ENCODE measurements at regions of chr1 and their contacts with region 1.

Region 1: DNA sequence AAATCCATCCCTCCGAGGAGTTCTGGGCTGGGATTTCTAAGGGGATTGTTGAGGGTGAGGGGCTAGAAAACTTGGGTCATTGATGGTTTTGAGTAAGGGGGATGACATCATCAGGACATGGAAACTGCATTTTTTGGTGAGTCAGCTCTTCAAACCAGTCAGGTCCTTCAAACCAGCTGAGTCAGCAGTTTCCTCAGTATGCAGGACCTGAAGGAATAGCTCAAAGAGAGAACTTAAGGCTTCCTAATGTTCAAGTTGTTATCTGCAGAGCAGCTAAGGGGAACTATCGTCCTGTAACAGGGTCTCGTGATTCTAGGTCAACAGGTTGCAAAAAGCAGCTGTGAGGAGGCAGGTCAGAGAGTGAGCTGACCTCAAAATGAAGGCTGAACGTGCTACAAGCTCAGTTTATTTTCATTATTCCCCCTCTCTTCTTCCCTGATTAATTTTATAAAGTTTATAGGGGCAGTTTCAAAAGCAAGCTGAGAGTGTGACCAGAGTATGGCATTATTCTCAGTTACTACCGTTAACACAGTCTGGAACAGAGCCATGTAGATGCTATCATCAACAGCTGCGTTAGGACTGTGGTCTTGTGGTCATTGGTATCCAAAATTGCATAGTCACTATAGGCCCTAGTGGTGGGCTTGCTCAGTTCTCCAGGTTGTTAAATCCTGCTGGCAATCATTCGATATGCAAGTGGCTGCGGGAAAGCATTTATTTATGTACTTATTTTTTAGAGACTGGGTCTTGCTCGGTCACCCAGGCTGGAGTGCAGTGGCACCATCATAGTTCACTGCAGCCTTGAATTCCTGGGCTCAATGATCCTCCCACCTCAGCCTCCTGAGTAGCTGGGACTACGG is 10.7 kb upstream of the SDC3 start:
- DNase-seq: no peak

Region 2: DNA sequence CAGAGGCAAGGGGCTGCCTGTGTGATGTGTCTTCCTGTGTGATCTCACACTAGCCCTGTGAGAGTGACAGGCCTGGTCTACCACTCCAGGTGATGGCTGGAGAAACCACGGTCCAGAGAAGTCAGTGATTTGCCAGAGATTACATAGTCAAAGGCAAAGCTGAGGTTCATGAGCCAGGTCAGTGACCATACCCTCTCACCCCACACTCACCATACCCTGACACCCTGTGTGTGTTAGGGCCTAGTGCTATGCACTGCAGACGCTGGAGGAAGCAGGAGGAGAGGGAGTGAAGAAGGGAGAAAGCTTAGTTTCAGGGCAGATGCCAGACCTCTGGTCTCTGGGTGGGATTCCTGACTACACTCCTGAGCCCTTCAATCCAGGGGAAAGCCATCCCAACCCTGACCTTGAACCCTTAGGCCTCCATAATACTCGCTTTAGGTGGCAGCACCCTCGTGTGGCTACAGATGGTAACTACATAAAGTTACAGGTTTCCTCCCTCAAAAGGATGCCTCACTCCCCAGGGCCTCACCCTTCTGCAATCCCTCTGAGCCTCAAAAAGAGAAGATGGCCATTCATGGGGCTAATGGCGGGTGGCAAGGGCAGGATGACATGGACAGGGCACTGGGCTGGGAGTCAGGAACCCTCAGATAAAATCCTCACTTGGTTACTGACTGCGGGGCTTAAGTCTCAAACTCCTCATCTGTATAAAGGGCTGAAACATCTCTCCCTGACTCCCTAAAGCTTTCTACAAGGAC is 10.1 kb after region 1 on chr1:
- CTCF ChIA-PET with region 1: interaction called, 10 read pairs
- POLR2A ChIA-PET with region 1: no interaction called
- DNase-seq: peak; percentile 85